ENCODE measurements at regions of chr15 and their contacts with region 1.

Region 1: GRCh38 chr15:81274931-81275707 is 48.8 kb downstream of the STARD5 start:
- DNase-seq: peak; percentile 56 to 85
- H3K4me3 ChIP-seq: no peak overlapping the region
- H3K27ac ChIP-seq: no peak overlapping the region
- H3K4me1 ChIP-seq: no peaks in the 10 kb centered on the region
- H3K27me3 ChIP-seq: no peaks in the 10 kb centered on the region
- CTCF ChIP-seq: peak; percentile 84 to 98 (median 98)
- EP300 ChIP-seq: no peak
- POLR2A ChIP-seq: no peak
- RAD21 ChIP-seq: peak; percentile 96

Region 2: GRCh38 chr15:81296673-81297072 is 21.6 kb after region 1 on chr15:
- CTCF ChIA-PET with region 1: interaction called, 15 read pairs
- POLR2A ChIA-PET with region 1: no interaction called
- DNase-seq: no peak
- H3K4me3 ChIP-seq: no peak overlapping the region
- H3K27ac ChIP-seq: no peak overlapping the region
- H3K4me1 ChIP-seq: peaks cover 0 to 7% (median 4%) of the 10 kb centered on the region in 4 experiments; a peak in 4 of 7 replicates
- H3K27me3 ChIP-seq: no peaks in the 10 kb centered on the region; a peak in 1 of 7 replicates
- CTCF ChIP-seq: no peak
- EP300 ChIP-seq: no peak
- POLR2A ChIP-seq: no peak
- RAD21 ChIP-seq: no peak

Region 3: DNA sequence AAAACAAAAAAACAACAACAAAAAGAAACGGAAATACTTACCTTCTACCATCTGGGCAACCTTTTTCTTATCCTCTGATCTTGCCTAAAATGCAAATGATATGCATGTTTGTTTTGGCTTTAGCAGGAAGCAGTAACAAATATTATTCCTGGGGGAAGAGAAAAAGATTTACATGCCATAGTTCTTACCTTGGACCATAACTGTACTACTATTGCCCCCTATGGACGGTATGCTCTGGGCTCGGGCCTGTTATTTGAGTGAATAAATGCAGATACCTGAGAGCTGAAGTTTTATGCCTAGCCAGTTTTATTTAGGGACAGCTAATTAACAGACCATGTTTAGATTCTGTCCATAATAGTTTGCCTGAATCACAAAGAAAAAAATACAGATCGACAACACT is 61.4 kb after region 1 on chr15:
- CTCF ChIA-PET with region 1: interaction called, 11 read pairs
- POLR2A ChIA-PET with region 1: no interaction called
- DNase-seq: peak in 1 of 2 experiments; percentile 32
- H3K4me3 ChIP-seq: no peak overlapping the region
- H3K27ac ChIP-seq: no peak overlapping the region
- H3K4me1 ChIP-seq: peaks cover 0 to 2% (median 0%) of the 10 kb centered on the region in 4 experiments; a peak in 1 of 7 replicates
- H3K27me3 ChIP-seq: no peaks in the 10 kb centered on the region
- CTCF ChIP-seq: peak in 1 of 3 experiments; percentile 18; a peak in 1 of 4 replicates
- EP300 ChIP-seq: no peak
- POLR2A ChIP-seq: no peak
- RAD21 ChIP-seq: peak in 1 of 2 experiments; percentile 35; a peak in 1 of 4 replicates

Region 4: DNA sequence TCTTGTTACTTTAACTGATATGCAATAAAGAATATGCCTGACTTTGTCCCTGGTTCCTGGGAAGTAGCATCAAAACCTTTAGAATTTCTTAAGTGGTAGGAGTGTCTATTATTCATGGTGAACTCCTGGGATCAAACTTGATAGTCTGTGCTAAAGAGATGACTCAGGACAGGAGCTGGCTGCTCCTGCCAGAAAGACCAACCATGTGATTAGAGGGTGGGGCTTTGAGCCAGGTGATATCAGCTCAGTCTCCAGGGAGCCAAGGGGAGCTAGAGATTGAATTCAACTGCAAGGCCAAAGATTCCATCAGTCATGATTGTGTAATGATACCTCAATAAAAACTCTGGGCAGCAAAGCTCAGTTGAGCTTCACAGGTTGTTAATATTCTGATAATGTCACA is 119.5 kb after region 1 on chr15:
- CTCF ChIA-PET with region 1: interaction called, 94 read pairs
- POLR2A ChIA-PET with region 1: interaction called, 3 read pairs
- DNase-seq: no peak
- H3K4me3 ChIP-seq: no peak overlapping the region
- H3K27ac ChIP-seq: no peak overlapping the region
- H3K4me1 ChIP-seq: no peaks in the 10 kb centered on the region
- H3K27me3 ChIP-seq: no peaks in the 10 kb centered on the region
- CTCF ChIP-seq: no peak
- EP300 ChIP-seq: no peak
- POLR2A ChIP-seq: no peak
- RAD21 ChIP-seq: no peak

Region 5: DNA sequence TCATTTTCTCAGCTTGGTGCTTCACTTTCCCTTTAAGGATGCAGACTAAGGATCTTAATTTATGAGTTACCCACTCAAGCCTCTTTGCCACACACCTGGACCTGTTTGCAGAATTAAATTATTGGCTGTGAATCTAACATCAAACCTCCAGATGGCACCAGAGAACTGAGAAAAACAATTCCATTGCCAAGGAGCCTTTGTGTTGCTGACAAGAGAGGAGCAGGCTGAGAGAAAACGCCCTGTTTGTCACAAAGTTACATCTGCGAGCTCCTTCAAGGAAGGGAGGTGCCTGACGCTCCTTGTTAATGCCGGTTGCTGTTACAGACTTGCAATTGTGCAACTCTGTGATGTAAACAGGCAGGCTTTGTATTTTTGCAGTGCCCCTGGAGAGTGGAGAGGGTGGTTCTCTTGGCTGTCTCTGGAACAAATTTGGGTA is 135.2 kb after region 1 on chr15:
- CTCF ChIA-PET with region 1: interaction called, 16 read pairs
- POLR2A ChIA-PET with region 1: no interaction called
- DNase-seq: peak; percentile 60 to 62
- H3K4me3 ChIP-seq: no peak overlapping the region
- H3K27ac ChIP-seq: no peak overlapping the region
- H3K4me1 ChIP-seq: peaks cover 0 to 3% (median 0%) of the 10 kb centered on the region in 4 experiments; a peak in 1 of 7 replicates
- H3K27me3 ChIP-seq: no peaks in the 10 kb centered on the region
- CTCF ChIP-seq: peak in 2 of 3 experiments; percentile 61 to 73; a peak in 3 of 4 replicates
- EP300 ChIP-seq: no peak
- POLR2A ChIP-seq: no peak
- RAD21 ChIP-seq: peak; percentile 87 to 94